ENCODE measurements at regions of chr19 and their contacts with region 1.

Region 1: GRCh38 chr19:58519355-58520256 is at the start of gene ZBTB45:
- DNase-seq: peak; percentile 96
- H3K4me3 ChIP-seq: peak within 1 kb of the TSS; percentile 80 to 87 (median 86)
- H3K27ac ChIP-seq: peak within 1 kb of the TSS; percentile 78
- H3K4me1 ChIP-seq: peaks cover 11% of the 10 kb centered on the region
- H3K27me3 ChIP-seq: no peaks in the 10 kb centered on the region
- CTCF ChIP-seq: peak; percentile 49 to 90
- total RNA-seq, gene ZBTB45: 8.2 to 14.1 TPM

Region 2: DNA sequence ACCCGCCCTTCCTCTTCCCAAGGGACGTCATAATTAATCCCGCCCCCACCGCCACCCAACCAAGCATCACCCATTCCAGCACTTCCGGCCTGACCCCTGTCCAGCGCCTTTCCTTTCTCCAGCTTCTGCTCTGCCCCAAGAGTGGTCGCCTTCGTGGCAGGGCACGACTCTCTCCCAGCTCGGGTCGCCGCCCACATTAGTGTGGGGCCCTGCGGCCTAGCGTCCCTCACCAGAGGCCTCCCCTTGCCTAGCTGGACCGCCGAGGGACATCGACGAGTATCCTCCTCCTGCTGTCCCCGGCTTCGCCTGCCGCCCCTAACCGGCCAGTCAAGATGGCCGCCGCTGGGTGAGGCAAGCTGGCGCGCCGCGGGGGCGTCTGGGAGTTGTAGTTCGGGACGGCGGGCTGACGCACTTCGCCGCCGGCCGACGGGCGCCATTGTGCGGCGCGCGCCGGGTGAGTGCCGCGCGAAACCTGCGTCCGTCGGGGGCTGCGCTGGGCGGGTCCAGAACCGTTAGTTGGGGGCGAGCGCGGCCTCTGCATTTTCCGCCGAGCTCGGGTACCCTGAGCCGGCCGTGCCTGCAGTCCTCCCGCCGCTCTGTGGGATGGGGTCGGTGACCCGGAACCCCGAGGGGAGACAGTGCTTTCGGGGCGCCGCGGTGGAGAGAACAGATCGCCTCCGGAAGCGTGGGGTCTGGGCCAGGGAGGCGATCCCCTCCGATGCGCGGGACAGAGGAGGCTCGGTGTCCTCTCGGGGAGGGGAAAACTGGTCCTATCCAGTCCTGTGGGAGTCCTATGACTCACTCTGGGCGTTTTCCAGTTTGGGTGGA is 336.4 kb before region 1 on chr19 and contains the start of gene ZNF274:
- CTCF ChIA-PET with region 1: no interaction called
- dilution Hi-C with region 1: no loop called
- in situ Hi-C with region 1: no loop called
- intact Hi-C with region 1: loop called (anchors 1 kb)
- DNase-seq: peak; percentile 90
- H3K4me3 ChIP-seq: peak within 1 kb of the TSS; percentile 81 to 97 (median 83)
- H3K27ac ChIP-seq: peak within 1 kb of the TSS; percentile 93
- H3K4me1 ChIP-seq: peaks cover 3% of the 10 kb centered on the region
- H3K27me3 ChIP-seq: no peaks in the 10 kb centered on the region
- CTCF ChIP-seq: no peak
- total RNA-seq, gene ZNF274: 15.7 to 33.8 TPM

Region 3: DNA sequence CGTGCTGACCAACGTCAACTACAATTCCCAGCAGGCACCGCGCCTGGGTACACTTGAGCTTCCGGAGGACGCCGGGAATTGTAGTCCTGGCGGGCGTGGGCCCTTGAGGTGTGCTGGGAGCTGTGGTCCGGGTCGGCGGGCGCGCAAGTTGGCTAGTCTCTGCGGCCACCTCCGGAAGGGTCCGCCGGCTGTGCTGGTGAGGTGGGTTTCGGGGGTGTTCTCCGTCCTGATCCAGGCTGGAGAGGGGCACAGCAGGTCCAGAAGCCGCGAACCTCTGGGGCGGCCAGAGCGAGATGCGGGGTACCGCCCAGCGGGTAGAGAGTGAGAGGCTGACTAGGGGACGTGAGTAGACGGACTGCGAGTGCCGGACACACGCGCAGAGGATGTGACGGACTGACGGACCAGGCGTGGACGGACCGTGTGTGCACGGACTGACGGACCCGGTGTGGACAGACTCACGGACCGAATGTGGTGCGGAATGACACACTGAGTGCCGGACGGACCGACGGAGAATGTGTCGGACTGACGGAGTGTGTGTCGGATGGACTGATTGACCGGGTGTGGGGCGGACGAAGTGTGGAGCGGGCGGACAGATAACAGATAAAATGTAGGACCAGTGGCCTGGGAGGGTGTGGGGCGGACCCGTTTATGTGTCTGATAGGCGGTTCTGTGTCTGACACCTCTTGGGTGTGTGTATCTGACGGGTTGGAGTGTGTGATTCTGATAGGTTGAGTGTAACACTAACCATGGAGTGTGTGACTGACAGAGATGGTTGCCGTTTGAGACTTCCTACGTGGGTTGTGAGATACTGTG is 192.5 kb before region 1 on chr19 and contains the start of gene ZSCAN22:
- CTCF ChIA-PET with region 1: no interaction called
- dilution Hi-C with region 1: no loop called
- in situ Hi-C with region 1: no loop called
- intact Hi-C with region 1: loop called (anchors 1 kb)
- DNase-seq: peak; percentile 97
- H3K4me3 ChIP-seq: peak within 1 kb of the TSS; percentile 56 to 100 (median 86)
- H3K27ac ChIP-seq: peak within 1 kb of the TSS; percentile 65
- H3K4me1 ChIP-seq: peaks cover 28% of the 10 kb centered on the region
- H3K27me3 ChIP-seq: no peaks in the 10 kb centered on the region
- CTCF ChIP-seq: no peak
- total RNA-seq, gene ZSCAN22: 3.2 to 3.7 TPM

Region 4: DNA sequence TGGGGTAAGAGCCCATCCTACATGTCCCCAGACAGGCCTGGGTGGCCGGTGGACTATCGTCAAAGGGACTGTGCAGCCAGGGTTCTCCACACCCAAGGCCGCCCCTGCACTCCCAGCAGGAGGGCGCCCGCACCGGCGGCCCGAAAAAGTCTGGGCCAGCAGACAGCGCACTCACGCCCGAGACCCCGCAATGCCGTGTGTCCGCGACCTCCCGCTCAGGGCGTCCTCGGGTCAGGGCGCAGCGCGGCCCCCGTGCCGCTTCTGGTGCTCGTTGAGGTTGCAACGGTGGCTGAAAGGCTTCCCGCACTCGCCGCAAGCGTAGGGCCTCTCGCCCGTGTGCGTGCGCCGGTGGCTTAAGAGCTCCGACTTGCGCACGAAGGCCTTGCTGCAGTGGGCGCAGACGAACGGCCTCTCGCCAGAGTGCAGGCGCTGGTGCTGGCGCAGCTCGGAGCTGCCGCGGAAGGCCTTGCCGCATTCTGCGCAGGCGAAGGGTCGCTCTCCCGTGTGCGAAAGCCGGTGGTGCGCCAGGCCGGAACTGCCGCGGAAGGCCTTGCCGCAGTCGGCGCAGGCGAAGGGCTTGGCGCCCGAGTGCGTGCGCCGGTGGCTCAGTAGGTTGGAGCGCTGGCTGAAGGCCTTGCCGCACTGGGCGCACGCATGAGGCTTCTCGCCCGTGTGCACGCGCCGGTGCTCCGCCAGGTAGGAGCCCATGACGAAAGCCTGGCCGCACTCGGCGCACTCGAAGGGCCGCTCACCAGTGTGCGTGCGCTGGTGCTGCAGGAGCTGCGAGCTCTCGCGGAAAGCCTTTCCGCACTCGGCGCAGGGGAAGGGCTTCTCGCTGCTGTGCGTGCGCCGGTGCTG is 163.5 kb before region 1 on chr19:
- CTCF ChIA-PET with region 1: no interaction called
- dilution Hi-C with region 1: no loop called
- in situ Hi-C with region 1: no loop called
- intact Hi-C with region 1: no loop called
- DNase-seq: peak; percentile 18
- H3K4me3 ChIP-seq: no peak overlapping the region
- H3K27ac ChIP-seq: no peak overlapping the region
- H3K4me1 ChIP-seq: no peaks in the 10 kb centered on the region
- H3K27me3 ChIP-seq: no peaks in the 10 kb centered on the region
- CTCF ChIP-seq: no peak

Region 5: GRCh38 chr19:58408152-58409009 is 111.2 kb before region 1 on chr19 and contains the start of gene ZNF584:
- CTCF ChIA-PET with region 1: no interaction called
- dilution Hi-C with region 1: no loop called
- in situ Hi-C with region 1: no loop called
- intact Hi-C with region 1: loop called (anchors 2 kb)
- DNase-seq: peak; percentile 89
- H3K4me3 ChIP-seq: peak within 1 kb of the TSS; percentile 71 to 93 (median 90)
- H3K27ac ChIP-seq: peak within 1 kb of the TSS; percentile 54
- H3K4me1 ChIP-seq: peaks cover 16% of the 10 kb centered on the region
- H3K27me3 ChIP-seq: no peaks in the 10 kb centered on the region
- CTCF ChIP-seq: peak in 1 of 2 donors; percentile 19
- total RNA-seq, gene ZNF584: 16.9 to 22.8 TPM

Region 6: DNA sequence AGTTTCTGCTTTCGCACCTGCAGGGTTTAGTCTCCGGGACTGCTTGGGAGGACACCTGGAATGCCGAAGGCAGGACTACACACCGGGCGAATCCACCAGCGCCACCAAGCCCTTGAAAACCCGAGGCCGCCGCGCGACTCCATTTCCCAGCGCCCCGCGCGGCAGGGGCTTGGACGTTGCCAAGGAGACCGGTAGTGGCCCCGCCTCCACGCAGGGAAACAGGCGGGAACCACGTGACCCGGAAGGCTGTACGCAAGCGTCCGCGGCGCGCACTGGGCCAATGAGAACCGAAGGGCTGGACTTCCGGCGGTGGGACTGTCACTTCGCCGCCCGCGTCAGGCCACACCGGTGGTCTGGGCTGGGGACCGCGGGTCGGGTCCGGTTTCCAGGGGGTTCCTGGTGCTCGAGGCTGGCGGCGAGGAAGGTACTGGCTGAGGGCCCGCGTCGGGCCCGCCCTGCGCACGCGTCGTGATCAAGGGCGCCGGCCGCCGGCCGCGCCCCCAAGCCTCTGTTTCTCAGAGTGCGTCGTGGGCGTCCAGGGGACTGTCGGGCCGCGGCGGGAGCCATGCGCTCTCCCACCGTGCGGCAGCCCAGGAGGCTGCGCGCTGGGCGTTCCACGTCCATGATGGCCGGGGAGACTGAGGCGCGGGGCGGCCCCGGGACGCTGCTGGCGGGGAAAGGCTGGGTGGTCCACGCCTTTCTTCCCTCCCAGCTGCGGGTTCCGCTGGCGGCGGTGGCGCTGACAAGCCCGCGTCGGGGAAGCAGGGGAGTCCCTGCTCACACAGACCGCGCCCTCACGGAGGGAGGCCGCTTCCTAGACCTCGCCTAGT is 52.6 kb before region 1 on chr19 and contains the start of gene ZNF324:
- CTCF ChIA-PET with region 1: no interaction called
- dilution Hi-C with region 1: no loop called
- in situ Hi-C with region 1: no loop called
- intact Hi-C with region 1: loop called (anchors 2 kb)
- DNase-seq: peak; percentile 96
- H3K4me3 ChIP-seq: peak within 1 kb of the TSS; percentile 70 to 96 (median 79)
- H3K27ac ChIP-seq: peak within 1 kb of the TSS; percentile 66
- H3K4me1 ChIP-seq: peaks cover 15% of the 10 kb centered on the region
- H3K27me3 ChIP-seq: no peaks in the 10 kb centered on the region
- CTCF ChIP-seq: peak in 1 of 2 donors; percentile 20
- total RNA-seq, gene ZNF324: 12.7 to 28.7 TPM

Region 7: GRCh38 chr19:58499021-58499927 is 20.3 kb before region 1 on chr19:
- CTCF ChIA-PET with region 1: no interaction called
- dilution Hi-C with region 1: no loop called
- in situ Hi-C with region 1: no loop called
- intact Hi-C with region 1: loop called (anchors 1 kb)
- DNase-seq: peak; percentile 96
- H3K4me3 ChIP-seq: peak overlapping the region; percentile 58 to 81 (median 63)
- H3K27ac ChIP-seq: peak overlapping the region; percentile 44
- H3K4me1 ChIP-seq: peaks cover 9% of the 10 kb centered on the region
- H3K27me3 ChIP-seq: no peaks in the 10 kb centered on the region
- CTCF ChIP-seq: peak in 1 of 2 donors; percentile 39

Region 8: GRCh38 chr19:58558623-58559274 is 39.1 kb after region 1 on chr19:
- CTCF ChIA-PET with region 1: interaction called, 3 read pairs
- dilution Hi-C with region 1: no loop called
- in situ Hi-C with region 1: no loop called
- intact Hi-C with region 1: loop called (anchors 1 kb)
- DNase-seq: peak; percentile 97
- H3K4me3 ChIP-seq: peak overlapping the region; percentile 70 to 88 (median 81)
- H3K27ac ChIP-seq: peak overlapping the region; percentile 91
- H3K4me1 ChIP-seq: peaks cover 50% of the 10 kb centered on the region
- H3K27me3 ChIP-seq: no peaks in the 10 kb centered on the region
- CTCF ChIP-seq: no peak

Measured in mammary epithelial cell (primary cell).